ENCODE measurements at regions of chr11 and their contacts with region 1.

Region 1: GRCh38 chr11:45354976-45355705 is 69.0 kb upstream of the SYT13 start:
- DNase-seq: peak in 1 of 2 experiments; percentile 91
- H3K4me3 ChIP-seq: peak overlapping the region; percentile 57 to 75 (median 72)
- H3K27ac ChIP-seq: no peak overlapping the region; the same call in 1 of the 2 replicates
- H3K4me1 ChIP-seq: peaks cover 0 to 8% (median 5%) of the 10 kb centered on the region in 4 experiments; a peak in 4 of 7 replicates
- H3K27me3 ChIP-seq: no peaks in the 10 kb centered on the region; a peak in 1 of 7 replicates
- CTCF ChIP-seq: no peak
- EP300 ChIP-seq: no peak
- POLR2A ChIP-seq: no peak
- RAD21 ChIP-seq: 0 out of 4 replicates have a peak, but pooled peaks of 1 of the 2 experiments have one; percentile 0

Region 2: GRCh38 chr11:45319077-45319476 is 36.1 kb before region 1 on chr11:
- CTCF ChIA-PET with region 1: no interaction called
- POLR2A ChIA-PET with region 1: no interaction called
- DNase-seq: no peak
- H3K4me3 ChIP-seq: no peak overlapping the region
- H3K27ac ChIP-seq: no peak overlapping the region
- H3K4me1 ChIP-seq: no peaks in the 10 kb centered on the region; a peak in 1 of 7 replicates
- H3K27me3 ChIP-seq: peaks cover 0 to 2% (median 0%) of the 10 kb centered on the region in 4 experiments; a peak in 1 of 7 replicates
- CTCF ChIP-seq: no peak
- EP300 ChIP-seq: no peak
- POLR2A ChIP-seq: no peak
- RAD21 ChIP-seq: no peak

Region 3: GRCh38 chr11:45339729-45340519 is 15.2 kb before region 1 on chr11:
- CTCF ChIA-PET with region 1: interaction called, 10 read pairs
- POLR2A ChIA-PET with region 1: interaction called, 3 read pairs
- DNase-seq: peak; percentile 94 to 100
- H3K4me3 ChIP-seq: peak overlapping the region in 3 of 4 experiments; percentile 16 to 50 (median 25); a peak in 3 of 8 replicates
- H3K27ac ChIP-seq: no peak overlapping the region
- H3K4me1 ChIP-seq: peaks cover 0 to 5% (median 4%) of the 10 kb centered on the region in 4 experiments; a peak in 4 of 7 replicates
- H3K27me3 ChIP-seq: no peaks in the 10 kb centered on the region
- CTCF ChIP-seq: peak; percentile 80 to 90 (median 85)
- EP300 ChIP-seq: no peak
- POLR2A ChIP-seq: no peak
- RAD21 ChIP-seq: peak; percentile 64 to 73

Region 4: DNA sequence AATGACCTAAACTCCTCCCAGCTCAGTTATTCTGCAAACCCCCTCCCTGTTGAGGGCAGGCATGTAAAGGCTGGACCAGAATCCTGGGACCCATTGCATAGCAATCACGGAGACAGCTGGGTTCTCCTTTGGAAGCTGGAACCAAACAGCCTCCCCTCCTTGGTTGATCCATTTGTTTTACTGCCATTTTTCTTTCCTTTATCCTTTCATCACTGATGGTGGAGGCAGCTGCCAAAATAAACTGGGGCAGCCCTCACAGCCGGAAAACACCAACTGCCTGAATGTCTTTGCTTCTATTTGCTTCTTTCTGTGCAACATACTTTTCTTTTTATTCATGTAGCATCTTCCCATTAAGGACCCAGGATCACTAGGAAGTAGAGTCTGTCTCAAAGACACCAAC is 81.0 kb after region 1 on chr11:
- CTCF ChIA-PET with region 1: no interaction called
- POLR2A ChIA-PET with region 1: no interaction called
- DNase-seq: no peak
- H3K4me3 ChIP-seq: no peak overlapping the region
- H3K27ac ChIP-seq: no peak overlapping the region
- H3K4me1 ChIP-seq: peaks cover 0 to 6% (median 1%) of the 10 kb centered on the region in 4 experiments; a peak in 3 of 7 replicates
- H3K27me3 ChIP-seq: no peaks in the 10 kb centered on the region
- CTCF ChIP-seq: no peak
- EP300 ChIP-seq: no peak
- POLR2A ChIP-seq: no peak
- RAD21 ChIP-seq: no peak

Region 5: DNA sequence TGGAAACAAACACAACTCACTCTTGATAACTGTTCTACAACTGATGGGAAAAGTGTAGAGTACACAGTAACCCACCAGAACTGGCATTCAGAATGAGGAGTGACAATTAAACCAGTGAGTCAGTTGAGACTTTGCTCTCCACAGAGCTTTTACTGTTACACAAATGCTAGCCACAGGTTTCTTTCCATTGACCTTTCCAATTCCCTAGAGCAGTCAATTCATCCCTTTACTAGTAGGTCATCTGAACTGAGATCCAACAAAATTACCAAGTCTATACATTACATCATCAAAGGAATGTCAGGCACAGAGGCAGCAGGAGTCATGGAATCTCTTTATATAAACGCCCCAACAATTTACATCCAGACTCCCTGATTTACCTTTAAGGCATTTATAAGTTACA is 700.2 kb after region 1 on chr11:
- CTCF ChIA-PET with region 1: no interaction called
- POLR2A ChIA-PET with region 1: no interaction called
- DNase-seq: peak in 1 of 2 experiments; percentile 34
- H3K4me3 ChIP-seq: peak overlapping the region in 1 of 4 experiments; percentile 26; a peak in 1 of 8 replicates
- H3K27ac ChIP-seq: no peak overlapping the region
- H3K4me1 ChIP-seq: peaks cover 3 to 32% (median 16%) of the 10 kb centered on the region in 4 experiments; a peak in 6 of 7 replicates
- H3K27me3 ChIP-seq: no peaks in the 10 kb centered on the region
- CTCF ChIP-seq: no peak
- EP300 ChIP-seq: no peak
- POLR2A ChIP-seq: peak in 1 of 2 experiments; percentile 56; a peak in 1 of 3 replicates
- RAD21 ChIP-seq: no peak

Measured in H1 (cell line).